ENCODE measurements at regions of chr6 and their contacts with region 1.

Region 1: GRCh38 chr6:96897383-96898240 is at the start of gene NDUFAF4:
- DNase-seq: peak; percentile 97
- H3K4me3 Mint-ChIP-seq: peak within 1 kb of the TSS; percentile 94
- H3K27ac Mint-ChIP-seq: peak within 1 kb of the TSS; percentile 94
- H3K4me1 Mint-ChIP-seq: peaks cover 26% of the 10 kb centered on the region
- H3K27me3 Mint-ChIP-seq: peaks cover 11% of the 10 kb centered on the region
- total RNA-seq, gene NDUFAF4: 56.3 to 59.9 TPM

Region 2: DNA sequence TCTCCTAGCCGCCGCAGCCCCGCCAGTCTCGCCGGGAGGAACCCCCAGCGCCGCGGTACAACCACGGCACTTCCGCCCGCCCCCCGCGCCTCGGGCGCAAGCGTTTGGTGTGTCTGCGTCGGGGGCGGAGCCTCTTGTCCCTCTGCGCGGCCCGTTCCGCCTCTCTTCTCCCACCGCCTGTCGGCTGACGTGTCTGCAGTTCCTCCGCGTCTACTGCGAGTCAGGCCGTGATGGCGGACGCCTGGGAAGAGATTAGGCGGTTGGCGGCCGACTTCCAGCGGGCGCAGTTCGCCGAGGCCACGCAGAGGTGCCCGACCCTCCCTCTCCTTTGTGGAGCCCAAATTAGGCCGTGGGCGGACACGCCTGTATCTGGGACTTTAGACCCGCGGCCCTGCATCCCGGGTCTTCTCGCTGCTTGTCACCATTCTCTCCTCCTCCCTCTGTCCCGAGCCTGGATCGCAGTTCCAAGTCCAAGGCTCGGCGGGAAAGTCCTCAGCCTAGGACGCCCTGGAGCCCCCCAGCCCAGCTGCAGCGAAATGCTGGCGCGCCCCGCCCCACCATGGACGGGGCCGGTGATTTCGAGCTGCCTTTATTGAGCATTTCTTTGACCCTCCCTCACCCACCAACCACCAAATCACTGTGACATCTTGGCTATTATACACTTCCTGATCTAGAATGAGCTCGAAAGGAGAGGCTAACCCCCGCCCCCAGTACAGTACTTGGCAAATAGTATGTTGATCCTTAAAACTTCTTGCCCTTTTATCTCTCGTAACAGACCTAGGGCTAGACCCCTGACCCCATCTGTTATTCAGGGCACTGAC is 375.8 kb before region 1 on chr6 and contains the start of gene UFL1:
- CTCF ChIA-PET with region 1: no interaction called
- POLR2A ChIA-PET with region 1: no interaction called
- intact Hi-C with region 1: loop called (anchors 1 kb)
- DNase-seq: peak; percentile 94
- H3K4me3 Mint-ChIP-seq: peak within 1 kb of the TSS; percentile 98
- H3K27ac Mint-ChIP-seq: peak within 1 kb of the TSS; percentile 99
- H3K4me1 Mint-ChIP-seq: peaks cover 16% of the 10 kb centered on the region
- H3K27me3 Mint-ChIP-seq: no peaks in the 10 kb centered on the region
- total RNA-seq, gene UFL1: 28.8 to 29.7 TPM

Region 3: DNA sequence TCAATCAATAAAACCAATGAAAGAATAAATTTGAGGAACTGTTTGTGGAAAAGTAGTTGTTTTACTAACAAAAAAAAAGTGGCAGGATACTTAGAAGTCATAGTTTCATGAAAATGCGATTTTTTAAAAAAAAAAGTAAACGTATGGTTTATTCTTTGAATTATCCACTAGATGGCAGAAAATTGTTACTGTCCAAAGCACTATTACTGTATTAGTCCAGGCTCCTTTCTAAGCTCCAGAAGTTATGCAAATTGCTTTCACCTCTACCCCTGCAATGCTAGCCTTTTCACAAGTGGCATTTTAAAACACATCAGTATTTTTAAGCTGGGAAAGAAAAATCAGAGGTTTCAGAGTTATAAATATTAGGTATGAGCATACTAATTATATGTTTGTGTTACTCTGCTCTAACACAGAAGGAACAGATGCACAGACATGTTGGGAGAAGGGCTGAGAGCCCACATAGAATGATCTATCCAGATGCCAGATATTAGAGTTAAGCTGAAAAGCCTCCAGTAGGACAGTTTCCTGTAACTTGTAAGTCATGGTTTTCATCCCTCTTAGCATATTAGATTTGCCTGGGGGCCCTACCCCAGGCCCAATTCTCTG is 270.8 kb before region 1 on chr6:
- CTCF ChIA-PET with region 1: interaction called, 3 read pairs
- POLR2A ChIA-PET with region 1: no interaction called
- intact Hi-C with region 1: loop called (anchors 1 kb)
- DNase-seq: no peak
- H3K4me3 Mint-ChIP-seq: no peak overlapping the region
- H3K27ac Mint-ChIP-seq: no peak overlapping the region
- H3K4me1 Mint-ChIP-seq: no peaks in the 10 kb centered on the region
- H3K27me3 Mint-ChIP-seq: peaks cover 6% of the 10 kb centered on the region

Region 4: GRCh38 chr6:96721227-96721626 is 176.4 kb before region 1 on chr6:
- CTCF ChIA-PET with region 1: no interaction called
- POLR2A ChIA-PET with region 1: no interaction called
- intact Hi-C with region 1: no loop called
- DNase-seq: no peak
- H3K4me3 Mint-ChIP-seq: no peak overlapping the region
- H3K27ac Mint-ChIP-seq: no peak overlapping the region
- H3K4me1 Mint-ChIP-seq: no peaks in the 10 kb centered on the region
- H3K27me3 Mint-ChIP-seq: peaks cover 2% of the 10 kb centered on the region

Region 5: DNA sequence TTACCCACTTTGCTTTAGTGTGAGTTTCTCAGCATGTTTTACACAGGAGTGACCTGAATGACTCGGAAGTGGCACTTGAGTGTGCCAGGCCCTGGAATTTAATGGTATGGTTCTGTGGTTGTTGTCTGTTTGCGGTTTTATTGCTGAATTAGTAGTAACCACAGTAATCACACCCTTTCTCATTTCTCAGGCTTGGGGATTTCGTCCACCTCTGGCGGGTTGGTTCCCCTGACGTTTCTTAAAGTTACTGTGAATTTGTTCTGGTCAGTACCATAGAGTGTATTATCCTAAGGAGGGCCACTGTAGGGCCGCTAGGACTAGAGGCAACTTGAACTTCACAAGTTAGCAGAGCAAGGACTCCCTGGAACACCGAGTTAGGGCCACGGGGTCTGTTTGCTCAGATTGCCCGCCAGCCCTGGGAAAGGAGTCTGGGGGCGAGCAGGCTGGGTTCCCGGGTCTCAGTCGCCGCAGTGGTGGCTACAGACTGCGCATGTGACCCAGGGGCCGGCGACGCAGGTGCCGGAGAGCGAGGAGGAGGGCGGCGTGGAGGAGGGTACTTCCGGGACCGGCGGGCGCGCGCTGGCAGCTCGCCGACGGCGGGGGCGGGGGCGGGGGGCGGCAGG is 26.4 kb after region 1 on chr6:
- CTCF ChIA-PET with region 1: interaction called, 6 read pairs
- POLR2A ChIA-PET with region 1: interaction called, 4 read pairs
- intact Hi-C with region 1: loop called (anchors 1 kb)
- DNase-seq: no peak
- H3K4me3 Mint-ChIP-seq: peak overlapping the region; percentile 77
- H3K27ac Mint-ChIP-seq: peak overlapping the region; percentile 77
- H3K4me1 Mint-ChIP-seq: peaks cover 37% of the 10 kb centered on the region
- H3K27me3 Mint-ChIP-seq: no peaks in the 10 kb centered on the region

Region 6: DNA sequence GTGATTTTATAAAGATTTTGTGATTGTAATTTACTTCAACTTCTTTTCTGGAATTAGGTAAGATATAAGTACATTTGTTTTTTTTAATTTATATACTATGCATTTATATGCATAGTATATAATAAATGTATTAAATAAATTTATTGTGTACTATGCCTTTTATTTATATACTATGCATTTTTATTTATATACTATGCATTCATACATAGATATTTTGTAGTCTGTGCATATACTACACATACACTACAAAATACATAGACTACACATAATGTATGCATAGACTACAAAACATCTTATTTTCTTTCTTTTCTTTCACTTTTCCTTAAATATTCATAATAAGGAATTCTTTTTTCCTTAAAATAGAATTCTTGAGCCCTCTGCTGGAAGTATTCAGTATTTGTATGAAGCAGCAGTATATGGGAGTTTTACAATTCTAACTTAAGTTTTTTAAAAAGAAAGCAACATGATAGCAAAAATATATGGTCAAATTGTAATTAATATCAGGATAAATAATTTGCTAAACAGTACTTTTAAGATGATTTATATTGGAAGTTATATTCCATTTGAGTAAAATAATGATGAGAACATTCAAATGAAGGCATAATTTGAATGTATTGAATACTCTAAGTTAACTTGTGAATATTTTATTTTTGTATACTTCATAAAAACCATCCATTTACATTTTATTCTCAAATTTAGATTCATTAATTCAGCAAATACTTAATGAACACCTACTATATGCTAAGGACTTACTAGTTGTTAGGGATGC is 156.2 kb after region 1 on chr6:
- CTCF ChIA-PET with region 1: interaction called, 4 read pairs
- POLR2A ChIA-PET with region 1: no interaction called
- intact Hi-C with region 1: loop called (anchors 1 kb)
- DNase-seq: no peak
- H3K4me3 Mint-ChIP-seq: no peak overlapping the region
- H3K27ac Mint-ChIP-seq: no peak overlapping the region
- H3K4me1 Mint-ChIP-seq: peaks cover 15% of the 10 kb centered on the region
- H3K27me3 Mint-ChIP-seq: no peaks in the 10 kb centered on the region

Region 7: GRCh38 chr6:97394160-97394748 is 496.6 kb after region 1 on chr6:
- CTCF ChIA-PET with region 1: no interaction called
- POLR2A ChIA-PET with region 1: no interaction called
- intact Hi-C with region 1: loop called (anchors 2 kb)
- DNase-seq: peak; percentile 34
- H3K4me3 Mint-ChIP-seq: no peak overlapping the region
- H3K27ac Mint-ChIP-seq: no peak overlapping the region
- H3K4me1 Mint-ChIP-seq: no peaks in the 10 kb centered on the region
- H3K27me3 Mint-ChIP-seq: peaks cover 9% of the 10 kb centered on the region

Measured in activated CD4-positive, alpha-beta memory T cell treated with anti-CD3 and anti-CD28 coated beads for 36 hours (primary cell).